Left ventricle myocardium superior (tissue), 1 donor: ENCODE measurements at regions of chr19 and their contacts with region 1.

Region 1: GRCh38 chr19:9621156-9622037 is at the start of gene ZNF561:
- DNase-seq: peak; percentile 90
- ATAC-seq: peak; percentile 95
- total RNA-seq, gene ZNF561: 22.5 TPM

Region 2: GRCh38 chr19:9674663-9675357 is 53.4 kb after region 1 on chr19 and contains the start of gene ZNF562:
- intact Hi-C with region 1: no loop called
- DNase-seq: peak; percentile 93
- ATAC-seq: peak; percentile 98
- total RNA-seq, gene ZNF562: 21.2 TPM

Region 3: DNA sequence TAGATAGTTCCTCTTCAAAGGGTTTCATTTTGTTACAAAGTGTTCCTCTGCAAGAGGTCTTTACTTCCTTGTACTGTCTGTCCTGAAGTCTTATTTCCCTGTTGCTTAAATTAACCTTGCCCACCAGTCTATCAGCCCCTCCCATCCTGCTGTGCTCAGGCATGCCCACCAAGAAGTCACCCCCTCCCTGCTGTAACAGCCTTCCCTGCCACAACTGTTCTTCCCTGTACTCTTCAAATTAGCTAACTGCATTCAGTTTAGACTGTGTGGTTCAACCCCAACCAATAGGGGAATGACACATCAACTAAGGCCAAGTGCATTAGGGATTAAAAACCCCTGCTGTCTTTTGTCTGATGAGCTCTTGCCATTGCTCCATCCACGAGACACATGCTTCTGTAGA is 87.9 kb after region 1 on chr19:
- intact Hi-C with region 1: no loop called
- DNase-seq: no peak
- ATAC-seq: peak; percentile 72

Region 4: GRCh38 chr19:9768175-9769112 is 147.0 kb after region 1 on chr19 and contains the start of gene ZNF846:
- intact Hi-C with region 1: loop called (anchors 10 kb)
- DNase-seq: peak; percentile 96
- ATAC-seq: peak; percentile 99
- total RNA-seq, gene ZNF846: 10.8 TPM

Region 5: DNA sequence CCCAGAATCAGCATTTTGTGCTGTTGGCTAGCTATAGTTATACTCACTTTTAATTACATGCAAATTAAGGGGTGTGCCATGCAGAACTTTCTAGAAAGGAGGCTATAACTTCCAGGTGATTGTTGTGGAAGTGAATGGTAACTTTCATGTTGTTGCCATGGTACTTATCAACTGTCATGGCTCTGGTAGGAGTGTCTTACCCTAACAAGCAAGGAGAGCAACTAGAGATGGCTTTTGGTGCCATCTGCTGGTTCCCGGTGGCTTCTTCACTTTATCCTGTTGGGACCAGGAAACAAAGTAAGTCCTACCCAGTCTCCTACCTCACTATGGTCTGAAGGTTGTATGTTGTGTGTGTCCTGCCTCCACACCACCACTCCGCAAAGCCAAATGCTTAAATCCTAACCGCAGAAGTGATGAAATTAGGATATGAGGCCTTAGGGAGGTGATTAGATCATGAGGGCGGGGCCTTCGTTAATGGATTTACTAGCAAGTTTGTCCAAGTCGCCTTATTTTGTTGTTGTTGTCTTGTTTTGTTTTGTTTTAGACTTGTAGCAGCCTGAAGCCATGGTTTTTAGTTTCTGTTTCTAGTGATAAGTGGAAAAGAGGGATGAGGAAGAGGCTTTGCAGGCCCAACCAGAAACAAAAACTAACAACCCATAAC is 174.8 kb after region 1 on chr19:
- intact Hi-C with region 1: loop called (anchors 10 kb)
- DNase-seq: peak; percentile 80
- ATAC-seq: peak; percentile 12